Dorsolateral prefrontal cortex (tissue), 120 donors: ENCODE measurements at regions of chr19 and their contacts with region 1.

Region 1: DNA sequence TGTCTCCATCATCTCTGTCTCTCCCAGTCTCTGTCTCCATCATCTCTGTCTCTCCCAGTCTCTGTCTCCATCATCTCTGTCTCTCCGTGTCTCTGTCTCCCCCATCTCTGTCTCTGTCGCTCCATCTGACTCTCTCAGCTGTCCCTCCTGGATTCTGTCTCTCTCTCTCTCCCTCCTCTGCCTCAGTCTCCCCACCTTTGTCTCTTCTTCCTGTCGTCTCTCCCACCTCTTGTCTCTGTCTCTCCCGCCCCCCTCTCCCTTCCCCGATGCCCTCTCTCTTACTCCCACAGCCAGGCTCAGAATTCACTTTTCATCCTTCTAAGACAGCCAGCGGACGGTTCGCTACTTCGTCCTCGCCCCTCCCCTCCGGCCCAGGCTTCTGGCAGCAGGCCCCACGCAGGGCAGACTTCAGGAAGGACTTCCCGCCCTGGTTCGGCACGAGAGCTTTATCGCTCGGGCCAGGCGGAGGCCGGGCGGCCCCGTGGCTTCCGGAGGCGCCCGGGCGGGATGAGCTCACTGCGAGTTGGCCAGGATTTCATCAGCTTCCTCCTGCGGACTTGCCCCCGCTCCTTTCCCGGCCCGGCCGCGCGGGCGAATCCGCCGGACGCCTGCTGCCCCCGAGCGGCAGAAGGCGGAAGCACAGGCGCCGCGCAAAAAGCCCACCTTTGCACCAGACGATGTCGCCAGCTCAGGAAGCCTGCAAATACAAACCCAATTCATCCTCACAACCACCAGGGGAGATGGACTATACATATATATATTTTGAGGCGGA is 12.4 kb upstream of the CCDC9 start:
- DNase-seq: peak; percentile 63 to 92 (median 84)
- H3K4me3 ChIP-seq: peak overlapping the region; percentile 0 to 69 (median 47)
- H3K27ac ChIP-seq: peak overlapping the region in 46 of 59 donors; percentile 5 to 80 (median 68)
- H3K27me3 ChIP-seq: no peaks in the 10 kb centered on the region
- CTCF ChIP-seq: peak in 55 of 56 donors; percentile 90 to 100 (median 99)

Region 2: GRCh38 chr19:47035127-47036096 is 208.6 kb before region 1 on chr19:
- intact Hi-C with region 1: loop called in 1 of 2 experiments (anchors 5 kb)
- DNase-seq: peak; percentile 69 to 93 (median 88)
- H3K4me3 ChIP-seq: peak overlapping the region; percentile 34 to 70 (median 52)
- H3K27ac ChIP-seq: peak overlapping the region in 46 of 59 donors; percentile 2 to 83 (median 66)
- H3K27me3 ChIP-seq: peaks cover 0 to 12% (median 0%) of the 10 kb centered on the region in 45 donors
- CTCF ChIP-seq: peak; percentile 87 to 99 (median 97)

Region 3: DNA sequence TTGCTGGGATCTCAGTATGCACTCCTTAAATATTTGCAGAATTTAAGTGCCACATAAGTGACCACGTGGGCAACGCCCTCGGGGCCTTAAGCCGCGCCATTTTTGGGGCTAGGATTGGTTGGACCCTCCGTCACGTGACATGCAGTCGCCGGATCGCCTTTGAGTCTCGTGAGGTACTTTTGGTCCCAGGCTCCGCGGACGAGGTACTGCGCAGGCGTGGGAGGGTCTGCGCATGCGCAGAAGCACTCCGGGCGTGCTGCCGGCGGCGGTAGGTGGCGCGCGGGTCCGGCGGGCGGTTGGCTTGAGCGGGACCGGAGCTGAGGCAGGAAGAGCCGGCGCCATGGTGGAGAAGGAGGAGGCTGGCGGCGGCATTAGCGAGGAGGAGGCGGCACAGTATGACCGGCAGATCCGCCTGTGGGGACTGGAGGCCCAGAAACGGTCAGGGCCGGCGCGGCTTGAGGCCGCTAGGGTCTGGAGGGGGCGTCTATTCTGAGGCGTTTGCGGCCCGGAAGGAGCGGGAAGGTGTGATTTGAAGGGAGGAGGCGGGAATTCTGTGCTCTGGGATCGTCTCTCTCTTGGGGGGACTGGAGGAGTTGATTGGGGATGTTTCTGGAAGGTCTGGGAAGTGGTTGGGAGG is 113.3 kb before region 1 on chr19 and contains the start of gene SAE1:
- intact Hi-C with region 1: loop called (anchors 5 kb)
- DNase-seq: peak; percentile 79 to 95 (median 90)
- H3K4me3 ChIP-seq: peak within 1 kb of the TSS; percentile 66 to 96 (median 85)
- H3K27ac ChIP-seq: peak within 1 kb of the TSS; percentile 29 to 98 (median 92)
- H3K27me3 ChIP-seq: no peaks in the 10 kb centered on the region
- CTCF ChIP-seq: peak; percentile 33 to 92 (median 82)
- total RNA-seq, gene SAE1: 50.2 to 109 (median 75.1) TPM

Region 4: GRCh38 chr19:47152224-47153017 is 91.5 kb before region 1 on chr19:
- intact Hi-C with region 1: loop called (anchors 2 to 5 kb)
- DNase-seq: no peak
- H3K4me3 ChIP-seq: no peak overlapping the region
- H3K27ac ChIP-seq: no peak overlapping the region
- H3K27me3 ChIP-seq: no peaks in the 10 kb centered on the region
- CTCF ChIP-seq: no peak

Region 5: DNA sequence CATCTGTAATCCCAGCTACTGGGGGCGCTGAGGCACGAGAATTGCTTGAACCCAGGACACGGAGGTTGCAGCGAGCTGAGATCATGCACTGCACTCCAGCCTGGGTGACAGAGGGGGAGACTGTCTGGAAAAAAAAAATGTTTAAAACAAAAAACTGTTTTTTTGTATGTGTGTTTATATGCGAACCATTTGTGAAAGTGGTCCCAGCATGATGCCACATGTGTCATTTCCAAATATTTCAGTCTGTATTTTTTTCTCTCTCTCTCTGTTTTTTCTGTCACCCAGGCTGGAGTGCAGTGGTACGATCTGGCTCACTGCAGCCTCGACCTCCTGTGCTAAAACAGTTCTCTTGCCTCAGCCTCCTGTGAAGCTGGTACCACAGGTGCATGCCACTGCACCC is 75.9 kb before region 1 on chr19:
- intact Hi-C with region 1: no loop called
- DNase-seq: no peak
- H3K4me3 ChIP-seq: no peak overlapping the region
- H3K27ac ChIP-seq: peak overlapping the region in 1 of 59 donors; percentile 22
- H3K27me3 ChIP-seq: no peaks in the 10 kb centered on the region
- CTCF ChIP-seq: no peak

Region 6: GRCh38 chr19:47210689-47211316 is 33.2 kb before region 1 on chr19:
- intact Hi-C with region 1: loop called (anchors 1 to 2 kb)
- DNase-seq: peak in 8 of 10 donors; percentile 30 to 88 (median 57)
- H3K4me3 ChIP-seq: no peak overlapping the region
- H3K27ac ChIP-seq: peak overlapping the region in 39 of 59 donors; percentile 8 to 75 (median 48)
- H3K27me3 ChIP-seq: no peaks in the 10 kb centered on the region
- CTCF ChIP-seq: peak; percentile 73 to 97 (median 87)

Region 7: DNA sequence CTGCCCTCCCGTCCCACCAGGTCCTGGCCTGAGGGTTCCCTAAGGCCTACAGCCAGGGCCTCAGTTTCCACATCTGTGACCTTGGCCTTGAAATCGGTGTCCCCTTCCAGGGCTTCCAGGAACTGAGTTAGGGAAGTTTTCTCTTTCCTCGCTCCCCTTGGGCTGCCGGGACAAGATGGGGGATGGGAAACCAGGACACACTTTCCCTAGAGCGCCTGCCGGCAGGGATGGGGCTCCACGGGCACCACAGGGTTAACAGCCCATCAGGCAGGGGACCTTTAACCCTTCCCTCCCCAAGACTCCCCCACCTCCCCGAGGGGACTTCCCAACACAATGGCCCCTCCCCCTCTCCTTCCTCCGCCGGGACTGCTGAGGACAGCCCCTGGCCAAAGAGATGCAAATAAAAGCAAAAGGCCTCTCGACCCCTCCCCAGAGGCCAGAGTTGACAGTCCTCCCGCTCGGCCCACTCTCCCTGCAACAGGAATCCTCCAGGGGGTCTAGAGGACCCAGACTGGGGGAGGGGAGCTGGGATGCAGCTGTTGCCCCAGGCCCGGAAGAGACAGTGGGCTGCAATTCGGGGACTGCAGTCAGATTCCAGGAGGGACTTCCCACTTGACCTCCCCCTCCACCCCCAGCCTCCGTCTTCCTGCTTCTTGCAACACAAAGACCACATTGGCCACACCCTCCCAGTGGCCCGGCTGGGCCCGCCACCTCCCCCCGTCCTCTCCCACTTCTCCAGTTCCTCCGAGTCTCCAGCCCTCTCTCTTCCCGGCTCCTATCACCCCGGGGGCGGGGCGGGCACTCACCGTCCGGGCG is 16.4 kb before region 1 on chr19:
- intact Hi-C with region 1: loop called in 1 of 2 experiments (anchors 2 kb)
- DNase-seq: peak in 7 of 10 donors; percentile 22 to 60 (median 55)
- H3K4me3 ChIP-seq: peak overlapping the region; percentile 10 to 92 (median 81)
- H3K27ac ChIP-seq: peak overlapping the region in 58 of 59 donors; percentile 76 to 99 (median 96)
- H3K27me3 ChIP-seq: no peaks in the 10 kb centered on the region
- CTCF ChIP-seq: peak in 1 of 56 donors; percentile 6

Region 8: GRCh38 chr19:47398707-47399597 is 155.0 kb after region 1 on chr19:
- intact Hi-C with region 1: no loop called
- DNase-seq: no peak
- H3K4me3 ChIP-seq: no peak overlapping the region
- H3K27ac ChIP-seq: no peak overlapping the region
- H3K27me3 ChIP-seq: no peaks in the 10 kb centered on the region
- CTCF ChIP-seq: no peak